A549 (cell line): ENCODE measurements at regions of chr19 and their contacts with region 1.

Region 1: GRCh38 chr19:14505488-14506432 is 9.8 kb upstream of the GIPC1 start:
- DNase-seq: peak; percentile 68 to 95
- ATAC-seq: peak; percentile 79 to 80
- H3K4me3 ChIP-seq: peak overlapping the region; percentile 35; the same call in 1 of the 3 replicates
- H3K27ac ChIP-seq: peak overlapping the region; percentile 94 to 100
- H3K4me1 ChIP-seq: peaks cover 73% of the 10 kb centered on the region
- CTCF ChIP-seq: peak; percentile 61
- EP300 ChIP-seq: peak in 1 of 2 experiments; percentile 24; a peak in 1 of 5 replicates
- POLR2A ChIP-seq: no peak
- RAD21 ChIP-seq: peak in 1 of 2 experiments; percentile 43; a peak in 2 of 5 replicates

Region 2: GRCh38 chr19:14459703-14460102 is 46.1 kb before region 1 on chr19:
- CTCF ChIA-PET with region 1: no interaction called
- POLR2A ChIA-PET with region 1: no interaction called
- DNase-seq: no peak
- ATAC-seq: no peak
- H3K4me3 ChIP-seq: no peak overlapping the region
- H3K27ac ChIP-seq: no peak overlapping the region
- H3K4me1 ChIP-seq: no peaks in the 10 kb centered on the region
- CTCF ChIP-seq: no peak
- EP300 ChIP-seq: no peak
- POLR2A ChIP-seq: no peak
- RAD21 ChIP-seq: no peak

Region 3: DNA sequence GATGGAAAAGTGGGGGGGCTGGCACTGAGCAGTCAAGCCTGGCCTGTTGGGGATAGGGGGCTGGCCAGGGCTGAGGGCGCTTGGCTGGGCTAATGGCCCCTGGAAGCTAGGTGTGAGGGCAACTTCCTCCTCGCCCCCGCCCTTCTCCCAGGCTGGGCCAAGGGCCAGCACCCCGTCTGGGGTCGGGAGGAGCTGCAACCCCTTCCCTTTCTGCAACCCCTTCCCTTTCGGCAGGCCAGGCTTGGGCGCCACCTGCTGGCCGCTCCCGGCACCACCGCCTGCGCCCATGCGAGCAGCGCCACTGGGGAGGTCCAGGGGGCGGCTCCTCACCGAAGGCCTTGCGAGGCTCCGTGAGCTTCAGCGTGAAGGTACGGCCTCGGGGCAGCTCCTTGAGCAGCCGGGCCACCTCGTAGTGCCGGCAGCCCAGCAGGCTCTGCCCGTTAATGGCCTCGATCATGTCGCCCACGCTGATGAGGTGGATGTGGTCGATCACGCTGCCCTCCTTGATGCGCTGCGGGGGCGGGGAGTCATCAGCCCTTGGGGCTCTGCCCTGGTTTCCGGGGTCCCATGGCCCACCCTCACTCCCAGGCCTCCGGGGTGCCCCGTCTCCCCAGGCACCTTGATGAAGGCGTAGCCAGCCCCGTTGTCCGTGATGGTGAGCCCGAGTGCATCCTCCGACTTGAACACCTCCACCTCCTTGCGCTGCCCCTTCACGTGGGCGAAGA is 25.6 kb before region 1 on chr19:
- CTCF ChIA-PET with region 1: interaction called, 17 read pairs
- POLR2A ChIA-PET with region 1: interaction called, 3 read pairs
- DNase-seq: peak; percentile 60 to 63
- ATAC-seq: peak; percentile 42 to 75
- H3K4me3 ChIP-seq: no peak overlapping the region
- H3K27ac ChIP-seq: peak overlapping the region in 1 of 2 experiments; percentile 53; a peak in 2 of 6 replicates
- H3K4me1 ChIP-seq: peaks cover 30% of the 10 kb centered on the region
- CTCF ChIP-seq: peak; percentile 65
- EP300 ChIP-seq: no peak
- POLR2A ChIP-seq: no peak
- RAD21 ChIP-seq: peak; percentile 46 to 49

Region 4: GRCh38 chr19:14525729-14526128 is 20.0 kb after region 1 on chr19:
- CTCF ChIA-PET with region 1: interaction called, 11 read pairs
- POLR2A ChIA-PET with region 1: no interaction called
- DNase-seq: no peak
- ATAC-seq: no peak
- H3K4me3 ChIP-seq: no peak overlapping the region
- H3K27ac ChIP-seq: peak overlapping the region in 1 of 2 experiments; percentile 38; a peak in 1 of 6 replicates
- H3K4me1 ChIP-seq: peaks cover 25% of the 10 kb centered on the region
- CTCF ChIP-seq: no peak
- EP300 ChIP-seq: no peak
- POLR2A ChIP-seq: no peak
- RAD21 ChIP-seq: no peak

Region 5: GRCh38 chr19:14599548-14600147 is 93.9 kb after region 1 on chr19:
- CTCF ChIA-PET with region 1: no interaction called
- POLR2A ChIA-PET with region 1: no interaction called
- DNase-seq: no peak
- ATAC-seq: no peak
- H3K4me3 ChIP-seq: no peak overlapping the region
- H3K27ac ChIP-seq: no peak overlapping the region
- H3K4me1 ChIP-seq: no peaks in the 10 kb centered on the region
- CTCF ChIP-seq: no peak
- EP300 ChIP-seq: no peak
- POLR2A ChIP-seq: no peak
- RAD21 ChIP-seq: no peak